Panc1 (cell line): ENCODE measurements at regions of chr17 and their contacts with region 1.

Region 1: GRCh38 chr17:81484195-81484979 is 28.2 kb downstream of the ACTG1 start:
- DNase-seq: no peak
- ATAC-seq: peak; percentile 83
- H3K4me3 ChIP-seq: peak overlapping the region; percentile 32 to 49
- H3K27ac ChIP-seq: peak overlapping the region; percentile 84
- H3K4me1 ChIP-seq: peaks cover 49% of the 10 kb centered on the region
- H3K27me3 ChIP-seq: no peaks in the 10 kb centered on the region
- CTCF ChIP-seq: peak; percentile 100

Region 2: GRCh38 chr17:81253358-81254131 is 230.8 kb before region 1 on chr17:
- CTCF ChIA-PET with region 1: interaction called, 6 read pairs
- POLR2A ChIA-PET with region 1: no interaction called
- in situ Hi-C with region 1: no loop called
- intact Hi-C with region 1: loop called (anchors 10 kb)
- DNase-seq: peak; percentile 15
- ATAC-seq: peak; percentile 50; the same call in 1 of the 2 replicates
- H3K4me3 ChIP-seq: no peak overlapping the region
- H3K27ac ChIP-seq: no peak overlapping the region
- H3K4me1 ChIP-seq: peaks cover 3% of the 10 kb centered on the region
- H3K27me3 ChIP-seq: no peaks in the 10 kb centered on the region
- CTCF ChIP-seq: peak; percentile 89

Region 3: DNA sequence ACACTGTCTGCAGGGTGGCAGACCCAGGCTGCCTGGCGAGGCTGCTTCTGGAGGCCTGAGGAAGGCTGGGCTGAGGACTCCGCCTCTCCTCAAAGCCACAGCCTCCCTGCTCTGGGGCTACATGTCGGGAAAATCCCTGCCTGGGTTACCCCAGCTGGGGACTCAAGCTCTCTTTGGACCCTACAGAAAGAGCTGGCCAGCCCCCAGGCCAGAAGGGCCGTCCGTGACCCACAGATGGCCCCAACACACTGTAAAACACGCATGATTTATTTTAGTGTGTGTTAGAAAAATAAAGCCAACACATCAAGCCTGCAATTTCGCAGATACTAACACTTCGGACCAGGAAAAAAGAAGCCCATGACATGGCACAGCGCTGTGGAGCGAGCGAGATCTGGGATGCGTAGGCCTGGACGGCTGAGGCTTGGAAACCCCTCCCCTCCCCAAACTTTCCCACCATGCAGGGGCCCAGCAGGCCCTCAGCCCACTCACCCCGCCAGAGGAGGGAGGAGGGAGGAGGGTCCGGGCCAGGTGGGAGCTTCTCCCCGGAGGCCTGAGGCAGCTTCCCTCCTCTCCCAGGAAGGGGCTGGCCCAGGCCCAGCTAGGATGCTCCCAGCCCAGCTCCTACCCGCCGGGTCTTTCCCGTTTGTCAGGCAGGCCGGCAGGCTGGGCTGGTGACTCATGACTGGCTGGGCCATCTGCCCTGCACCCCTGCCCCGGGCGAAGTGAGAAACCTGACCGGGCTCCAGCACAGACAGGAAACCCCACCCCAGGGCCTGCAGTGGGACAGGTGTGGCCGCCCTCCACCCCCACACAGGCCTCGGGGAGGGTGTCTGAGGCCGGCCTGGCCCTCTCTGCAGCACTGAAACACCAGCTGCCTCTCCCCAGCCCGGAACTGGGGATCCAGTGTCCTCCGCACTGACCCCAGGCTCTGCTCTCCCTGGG is 155.1 kb before region 1 on chr17:
- CTCF ChIA-PET with region 1: no interaction called
- POLR2A ChIA-PET with region 1: no interaction called
- in situ Hi-C with region 1: no loop called
- intact Hi-C with region 1: no loop called
- DNase-seq: no peak
- ATAC-seq: peak; percentile 83
- H3K4me3 ChIP-seq: peak overlapping the region in 1 of 2 experiments; percentile 36; a peak in 2 of 4 replicates
- H3K27ac ChIP-seq: peak overlapping the region; percentile 97
- H3K4me1 ChIP-seq: peaks cover 55% of the 10 kb centered on the region
- H3K27me3 ChIP-seq: no peaks in the 10 kb centered on the region
- CTCF ChIP-seq: no peak

Region 4: DNA sequence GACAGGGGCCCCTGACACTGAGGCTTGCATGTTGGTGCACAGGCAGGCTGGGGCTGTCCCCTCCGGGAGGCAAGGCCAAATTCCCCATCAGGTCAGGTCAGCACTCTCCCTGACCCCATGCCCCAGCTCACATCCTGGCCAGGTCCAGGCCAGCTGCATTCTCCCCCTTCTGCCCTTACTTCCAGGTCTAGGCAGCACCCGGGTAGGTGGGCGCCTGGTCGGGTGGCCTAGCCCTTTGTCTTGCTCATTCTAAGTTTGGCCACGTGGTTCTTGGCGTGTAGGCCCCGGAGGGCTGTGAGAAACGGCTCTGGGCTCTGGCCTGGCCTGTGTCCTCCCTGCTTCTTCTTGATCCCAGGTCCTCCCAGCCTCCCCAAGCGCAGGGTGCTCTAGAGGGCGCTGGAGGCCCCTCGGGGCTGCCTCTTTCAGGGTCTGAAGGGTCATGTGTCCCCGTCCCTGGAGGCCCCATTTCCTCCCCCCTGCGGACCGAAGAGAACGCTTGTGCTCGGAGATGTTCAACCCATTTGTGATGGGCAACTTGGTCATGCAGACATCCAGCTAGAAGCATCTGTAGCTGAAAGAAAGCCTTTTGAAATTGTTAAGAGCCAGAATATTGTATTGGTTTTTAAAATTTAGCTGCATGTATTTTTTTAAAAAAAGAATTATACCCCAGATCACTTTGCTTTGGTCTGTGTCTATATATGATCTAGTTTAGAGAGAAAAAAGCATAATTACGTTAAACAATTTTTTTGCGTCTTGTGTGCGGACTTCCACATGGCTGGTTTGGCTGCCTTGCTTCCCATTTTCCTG is 82.5 kb before region 1 on chr17:
- CTCF ChIA-PET with region 1: interaction called, 4 read pairs
- POLR2A ChIA-PET with region 1: interaction called, 3 read pairs
- in situ Hi-C with region 1: no loop called
- intact Hi-C with region 1: loop called (anchors 5 kb)
- DNase-seq: no peak
- ATAC-seq: peak; percentile 36
- H3K4me3 ChIP-seq: peak overlapping the region; percentile 69 to 83
- H3K27ac ChIP-seq: peak overlapping the region; percentile 100
- H3K4me1 ChIP-seq: peaks cover 62% of the 10 kb centered on the region
- H3K27me3 ChIP-seq: no peaks in the 10 kb centered on the region
- CTCF ChIP-seq: peak; percentile 91

Region 5: GRCh38 chr17:81551407-81552243 is 67.2 kb after region 1 on chr17:
- CTCF ChIA-PET with region 1: no interaction called
- POLR2A ChIA-PET with region 1: no interaction called
- in situ Hi-C with region 1: no loop called
- intact Hi-C with region 1: no loop called
- DNase-seq: no peak
- ATAC-seq: peak; percentile 1
- H3K4me3 ChIP-seq: peak overlapping the region; percentile 84 to 91
- H3K27ac ChIP-seq: peak overlapping the region; percentile 100
- H3K4me1 ChIP-seq: peaks cover 54% of the 10 kb centered on the region
- H3K27me3 ChIP-seq: no peaks in the 10 kb centered on the region
- CTCF ChIP-seq: no peak

Region 6: GRCh38 chr17:81829858-81830257 is 345.5 kb after region 1 on chr17:
- CTCF ChIA-PET with region 1: no interaction called
- POLR2A ChIA-PET with region 1: interaction called, 13 read pairs
- in situ Hi-C with region 1: no loop called
- intact Hi-C with region 1: no loop called
- DNase-seq: no peak
- ATAC-seq: no peak
- H3K4me3 ChIP-seq: no peak overlapping the region
- H3K27ac ChIP-seq: no peak overlapping the region
- H3K4me1 ChIP-seq: peaks cover 18% of the 10 kb centered on the region
- H3K27me3 ChIP-seq: no peaks in the 10 kb centered on the region
- CTCF ChIP-seq: no peak